IMR-90 (cell line): ENCODE measurements at regions of chr10 and their contacts with region 1.

Region 1: DNA sequence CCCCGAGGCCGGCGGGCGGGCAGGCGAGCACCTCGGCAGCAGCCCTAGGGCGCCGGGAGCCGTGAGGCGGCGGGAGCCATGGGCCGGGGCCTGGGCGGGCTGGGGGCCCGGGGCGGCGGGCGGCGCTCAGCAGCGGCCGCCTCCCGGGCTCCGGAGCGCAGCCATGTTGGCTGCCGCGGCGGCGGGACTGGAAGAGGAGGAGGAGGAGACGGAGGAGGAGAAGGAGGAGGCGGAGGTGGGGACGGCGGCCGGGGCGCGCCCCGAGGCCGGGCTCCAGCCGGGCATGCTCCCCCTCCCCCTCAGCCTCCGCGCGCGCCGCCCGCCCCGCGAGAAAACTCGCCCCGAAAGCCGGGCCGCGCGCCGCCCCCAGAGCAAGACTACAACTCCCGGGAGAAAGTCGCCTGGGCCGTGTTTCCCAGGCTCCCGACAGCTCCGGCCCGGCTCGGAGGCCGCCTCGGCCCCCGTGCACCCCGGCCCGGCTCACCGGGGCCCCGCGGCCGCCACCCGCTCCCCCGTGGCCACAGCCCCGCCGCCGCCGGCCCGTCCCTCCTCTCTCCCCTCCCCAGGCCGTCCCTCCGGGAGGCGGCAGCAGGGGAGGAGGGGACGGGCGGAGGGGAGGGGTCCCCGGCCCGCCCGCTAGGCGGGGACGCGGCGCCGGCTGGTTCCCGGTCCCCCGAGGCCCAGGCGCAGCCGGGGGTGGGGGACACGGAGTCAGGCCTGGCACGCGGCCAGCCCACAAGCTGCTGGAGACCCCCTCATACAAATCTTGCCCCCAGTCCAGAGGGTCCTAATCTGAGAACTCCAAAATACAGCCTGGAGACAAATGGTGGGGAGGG is at the start of gene DLG5:
- DNase-seq: peak; percentile 52
- ATAC-seq: peak; percentile 94
- H3K4me3 ChIP-seq: peak within 1 kb of the TSS; percentile 99
- H3K27ac ChIP-seq: peak within 1 kb of the TSS; percentile 76
- H3K4me1 ChIP-seq: peaks cover 7% of the 10 kb centered on the region
- H3K27me3 ChIP-seq: no peaks in the 10 kb centered on the region
- CTCF ChIP-seq: no peak
- POLR2A ChIP-seq: 0 out of 2 replicates have a peak, but pooled peaks have one; percentile 32
- RAD21 ChIP-seq: no peak
- total RNA-seq, gene DLG5: 12.7 and 14.7 TPM in 2 replicates

Region 2: GRCh38 chr10:77970869-77971803 is 44.4 kb after region 1 on chr10:
- CTCF ChIA-PET with region 1: no interaction called
- POLR2A ChIA-PET with region 1: no interaction called
- dilution Hi-C with region 1: no loop called
- in situ Hi-C with region 1: no loop called
- intact Hi-C with region 1: loop called (anchors 2 kb)
- DNase-seq: peak; percentile 98
- ATAC-seq: peak; percentile 91
- H3K4me3 ChIP-seq: peak overlapping the region; percentile 23; the same call in 1 of the 2 replicates
- H3K27ac ChIP-seq: peak overlapping the region; percentile 91
- H3K4me1 ChIP-seq: peaks cover 3% of the 10 kb centered on the region; the same call in 1 of the 2 replicates
- H3K27me3 ChIP-seq: no peaks in the 10 kb centered on the region
- CTCF ChIP-seq: no peak
- POLR2A ChIP-seq: no peak
- RAD21 ChIP-seq: peak; percentile 11; the same call in 1 of the 2 replicates

Region 3: DNA sequence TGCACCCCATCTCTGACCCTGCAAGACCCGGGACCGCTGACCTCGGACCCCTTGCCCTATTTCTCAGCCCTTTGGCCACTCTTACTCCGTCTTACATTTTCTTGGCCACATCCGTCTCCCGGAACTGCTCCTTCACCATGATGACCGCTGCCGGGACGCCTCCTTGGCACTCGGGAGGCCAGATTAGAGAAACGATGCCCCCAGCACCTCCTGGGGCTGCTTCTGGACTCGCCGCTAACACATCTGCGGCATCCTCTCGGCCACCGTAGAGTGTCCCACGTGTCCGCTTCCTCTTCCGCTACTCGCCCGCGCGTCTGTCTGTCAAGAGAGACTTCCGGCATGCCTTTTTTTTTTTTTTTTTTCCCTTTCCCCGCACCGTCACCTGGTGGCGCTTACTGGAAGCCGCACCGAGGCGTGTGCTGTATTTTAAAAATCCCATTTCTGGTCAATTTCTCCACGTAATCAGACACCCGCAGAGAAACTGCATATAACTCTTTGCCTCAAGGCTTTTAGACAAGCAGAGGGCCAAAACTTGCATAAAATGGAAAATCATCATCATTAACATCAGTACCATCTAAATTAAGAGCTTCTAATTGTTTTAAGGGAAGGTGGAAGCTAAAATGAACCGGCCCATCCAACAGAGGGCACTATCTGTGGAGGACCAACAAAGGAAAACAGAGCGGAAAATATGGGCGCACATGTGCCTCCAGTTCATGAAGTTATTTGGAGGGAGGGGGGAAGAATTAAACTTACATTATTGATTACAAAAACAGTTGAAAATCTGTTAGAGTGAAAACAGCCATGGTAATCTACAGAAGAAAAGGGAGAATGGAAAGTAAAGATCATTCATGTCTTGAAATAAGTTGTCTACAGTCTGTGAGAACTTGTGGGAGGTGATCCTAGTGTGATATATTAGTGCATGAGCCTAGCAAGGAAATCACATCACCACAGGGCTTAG is 102.8 kb after region 1 on chr10 and contains the start of gene POLR3A:
- CTCF ChIA-PET with region 1: no interaction called
- POLR2A ChIA-PET with region 1: no interaction called
- dilution Hi-C with region 1: no loop called
- in situ Hi-C with region 1: no loop called
- intact Hi-C with region 1: loop called (anchors 10 kb)
- DNase-seq: peak; percentile 99
- ATAC-seq: peak; percentile 59
- H3K4me3 ChIP-seq: peak within 1 kb of the TSS; percentile 90
- H3K27ac ChIP-seq: peak within 1 kb of the TSS; percentile 92
- H3K4me1 ChIP-seq: peaks cover 11% of the 10 kb centered on the region
- H3K27me3 ChIP-seq: no peaks in the 10 kb centered on the region
- CTCF ChIP-seq: peak; percentile 72
- POLR2A ChIP-seq: no peak
- RAD21 ChIP-seq: peak; percentile 48
- total RNA-seq, gene POLR3A: 21.4 and 24.4 TPM in 2 replicates